Heart right ventricle (tissue), 16 donors: ENCODE measurements at regions of chr3 and their contacts with region 1.

Region 1: DNA sequence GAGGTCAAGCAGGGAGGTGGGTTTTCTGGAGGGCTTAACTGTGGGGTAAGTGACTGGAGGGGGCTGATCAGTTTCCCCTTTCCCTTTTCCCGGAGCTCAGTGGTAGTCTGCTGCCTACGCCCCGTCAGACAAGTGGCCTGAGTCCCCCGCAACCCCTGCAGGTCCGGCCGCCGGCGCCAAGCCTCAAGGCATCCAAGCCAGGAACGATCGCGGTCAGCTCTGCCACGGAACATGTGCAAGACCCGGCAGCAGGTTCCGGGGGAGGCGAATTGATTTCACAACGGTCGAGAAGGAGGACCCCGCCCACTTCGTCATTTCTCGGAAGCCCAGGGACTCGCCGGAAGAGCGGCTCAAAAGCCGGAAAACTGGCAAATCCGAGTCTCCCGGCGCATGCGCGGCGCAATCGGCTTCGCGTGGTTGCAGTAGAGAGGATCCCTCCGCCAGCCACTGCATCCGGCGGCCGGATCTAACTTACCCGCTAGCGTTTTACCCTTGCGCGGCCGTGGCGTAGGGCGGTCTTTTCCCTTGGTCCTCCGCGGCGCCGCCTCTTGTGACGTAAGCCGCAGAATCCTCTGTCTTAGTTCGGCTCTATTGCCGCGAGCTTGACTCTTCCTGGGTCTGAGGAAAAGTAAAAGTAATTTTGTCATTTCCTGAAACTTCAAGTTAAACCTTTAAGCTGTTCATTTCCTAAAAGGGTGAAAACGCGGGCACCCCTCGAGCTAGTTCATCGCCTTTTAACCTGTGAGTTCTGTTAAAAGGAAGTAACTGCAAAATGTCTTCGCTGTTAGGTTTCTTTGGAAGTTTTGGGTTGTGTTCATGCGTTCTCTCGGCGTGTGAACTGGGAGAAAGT is 14.9 kb upstream of the CCNL1 start:
- DNase-seq: peak; percentile 98 to 100
- ATAC-seq: peak; percentile 97 to 99 (median 98)
- H3K4me3 ChIP-seq: peak overlapping the region; percentile 43 to 72 (median 64)
- H3K27ac ChIP-seq: peak overlapping the region; percentile 92 to 98 (median 96)
- H3K4me1 ChIP-seq: peaks cover 5 to 31% (median 22%) of the 10 kb centered on the region in 9 donors
- H3K27me3 ChIP-seq: no peaks in the 10 kb centered on the region
- CTCF ChIP-seq: no peak

Region 2: DNA sequence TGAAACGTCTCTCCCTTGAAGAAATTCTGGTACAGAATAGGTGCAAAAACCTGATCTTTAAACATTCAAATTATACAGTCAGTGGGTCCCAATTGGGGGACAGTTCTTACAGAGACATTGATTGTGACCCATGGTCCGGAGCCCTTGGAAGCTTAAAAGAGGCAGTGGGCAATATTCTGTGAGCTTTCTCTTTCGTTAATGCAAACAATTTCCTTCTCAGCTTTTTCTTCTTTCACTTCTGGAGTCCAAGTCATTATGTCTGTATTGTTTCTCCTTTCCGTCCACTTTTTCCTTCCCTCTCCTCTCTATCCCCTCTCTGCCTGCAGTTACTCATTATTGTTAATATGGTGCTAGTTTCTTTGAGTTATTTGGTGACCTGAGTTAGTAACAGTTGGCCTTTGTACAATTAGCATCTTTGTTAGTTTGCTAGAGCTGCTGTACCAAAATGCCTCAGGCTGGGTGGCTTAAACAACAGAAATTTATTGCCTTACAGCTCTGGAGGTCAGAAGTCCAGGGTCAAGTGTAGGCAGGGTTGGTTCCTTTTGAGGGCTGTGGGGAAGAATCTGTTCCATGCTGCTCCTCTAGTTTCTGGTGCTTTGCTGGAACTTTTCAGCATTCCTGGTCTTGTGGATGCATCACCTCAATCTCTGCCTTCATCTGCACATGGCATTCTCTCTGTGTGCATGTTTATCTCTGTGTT is 1201.8 kb before region 1 on chr3:
- intact Hi-C with region 1: no loop called
- DNase-seq: no peak
- ATAC-seq: no peak
- H3K4me3 ChIP-seq: no peak overlapping the region
- H3K27ac ChIP-seq: no peak overlapping the region
- H3K4me1 ChIP-seq: no peaks in the 10 kb centered on the region
- H3K27me3 ChIP-seq: no peaks in the 10 kb centered on the region
- CTCF ChIP-seq: no peak

Region 3: GRCh38 chr3:157159762-157160657 is 14.9 kb before region 1 on chr3 and contains the start of gene CCNL1:
- intact Hi-C with region 1: loop called in 7 of 10 experiments (anchors 1 to 2 kb)
- DNase-seq: peak; percentile 97
- ATAC-seq: peak; percentile 93 to 97 (median 96)
- H3K4me3 ChIP-seq: peak within 1 kb of the TSS; percentile 87 to 100 (median 96)
- H3K27ac ChIP-seq: peak within 1 kb of the TSS; percentile 97 to 100 (median 100)
- H3K4me1 ChIP-seq: peaks cover 9 to 61% (median 51%) of the 10 kb centered on the region in 9 donors
- H3K27me3 ChIP-seq: no peaks in the 10 kb centered on the region
- CTCF ChIP-seq: no peak
- total RNA-seq, gene CCNL1: 19.1 to 52.5 (median 24.7) TPM

Region 4: GRCh38 chr3:157248590-157249422 is 73.9 kb after region 1 on chr3:
- intact Hi-C with region 1: loop called in 1 of 10 experiments (anchors 5 kb)
- DNase-seq: peak; percentile 25 to 72
- ATAC-seq: peak; percentile 85 to 97 (median 96)
- H3K4me3 ChIP-seq: no peak overlapping the region
- H3K27ac ChIP-seq: peak overlapping the region; percentile 70 to 92 (median 86)
- H3K4me1 ChIP-seq: peaks cover 5 to 49% (median 25%) of the 10 kb centered on the region in 9 donors
- H3K27me3 ChIP-seq: no peaks in the 10 kb centered on the region
- CTCF ChIP-seq: no peak